HCT116 (cell line): ENCODE measurements at regions of chr1 and their contacts with region 1.

Region 1: DNA sequence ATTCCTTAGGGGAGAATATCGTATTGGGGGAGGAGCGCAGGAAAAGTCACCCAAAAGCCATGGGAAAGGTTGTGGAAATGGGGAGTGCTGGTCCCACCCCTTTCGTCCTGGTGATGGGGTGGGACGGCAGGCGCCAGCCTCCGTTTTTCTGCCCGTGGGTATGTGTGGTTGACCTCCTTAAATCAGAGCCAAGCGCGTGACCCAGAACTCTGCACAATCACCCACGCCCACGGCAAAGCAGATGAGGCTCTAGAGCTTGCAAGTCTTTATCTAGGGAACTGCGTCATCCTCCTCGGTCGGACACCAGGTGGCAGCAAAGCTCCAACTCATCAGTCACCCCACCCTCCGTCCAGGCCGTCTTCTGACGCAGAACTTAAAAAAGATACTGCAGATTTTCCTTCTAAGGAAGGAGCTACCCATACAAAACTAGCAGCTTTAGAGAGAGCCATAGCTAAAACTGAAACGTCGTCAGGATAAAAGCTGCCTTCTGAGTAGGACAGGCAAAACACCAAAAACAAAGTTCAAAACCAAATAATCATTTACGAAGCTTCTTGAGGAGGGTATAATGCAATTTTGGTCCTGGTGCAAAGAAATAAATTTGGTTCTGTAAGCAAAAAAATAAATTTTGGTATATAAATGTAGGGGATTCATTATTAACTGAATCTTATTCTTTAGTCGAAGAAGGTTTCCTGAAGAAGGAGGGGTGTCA is 62.0 kb downstream of the TBX19 start:
- DNase-seq: peak; percentile 82
- ATAC-seq: peak; percentile 96
- H3K4me3 ChIP-seq: peak overlapping the region in 1 of 2 experiments; percentile 31; a peak in 2 of 4 replicates
- H3K27ac ChIP-seq: peak overlapping the region; percentile 38; the same call in 1 of the 2 replicates
- H3K4me1 ChIP-seq: peaks cover 11 to 21% of the 10 kb centered on the region in 2 experiments; a peak in 3 of 4 replicates
- H3K27me3 ChIP-seq: no peaks in the 10 kb centered on the region
- CTCF ChIP-seq: peak; percentile 58 to 87 (median 65)
- POLR2A ChIP-seq: no peak
- RAD21 ChIP-seq: peak; percentile 98

Region 2: GRCh38 chr1:168321945-168322344 is 20.8 kb before region 1 on chr1:
- CTCF ChIA-PET with region 1: interaction called, 12 read pairs
- POLR2A ChIA-PET with region 1: no interaction called
- RAD21 ChIA-PET with region 1: no interaction called
- intact Hi-C with region 1: no loop called
- DNase-seq: peak; percentile 27
- ATAC-seq: peak; percentile 75
- H3K4me3 ChIP-seq: no peak overlapping the region
- H3K27ac ChIP-seq: no peak overlapping the region
- H3K4me1 ChIP-seq: peaks cover 13 to 28% of the 10 kb centered on the region in 2 experiments
- H3K27me3 ChIP-seq: no peaks in the 10 kb centered on the region
- CTCF ChIP-seq: peak; percentile 40 to 65 (median 58); a peak in 5 of 6 replicates
- POLR2A ChIP-seq: no peak
- RAD21 ChIP-seq: peak; percentile 73

Region 3: GRCh38 chr1:168407832-168408535 is 65.3 kb after region 1 on chr1:
- CTCF ChIA-PET with region 1: interaction called, 11 read pairs
- POLR2A ChIA-PET with region 1: interaction called, 5 read pairs
- RAD21 ChIA-PET with region 1: interaction called in 1 of 2 experiments, 3 read pairs
- intact Hi-C with region 1: no loop called
- DNase-seq: no peak
- ATAC-seq: peak; percentile 14
- H3K4me3 ChIP-seq: peak overlapping the region; percentile 10 to 30; a peak in 3 of 4 replicates
- H3K27ac ChIP-seq: peak overlapping the region; percentile 95
- H3K4me1 ChIP-seq: peaks cover 54 to 74% of the 10 kb centered on the region in 2 experiments
- H3K27me3 ChIP-seq: no peaks in the 10 kb centered on the region
- CTCF ChIP-seq: no peak
- POLR2A ChIP-seq: no peak
- RAD21 ChIP-seq: no peak

Region 4: DNA sequence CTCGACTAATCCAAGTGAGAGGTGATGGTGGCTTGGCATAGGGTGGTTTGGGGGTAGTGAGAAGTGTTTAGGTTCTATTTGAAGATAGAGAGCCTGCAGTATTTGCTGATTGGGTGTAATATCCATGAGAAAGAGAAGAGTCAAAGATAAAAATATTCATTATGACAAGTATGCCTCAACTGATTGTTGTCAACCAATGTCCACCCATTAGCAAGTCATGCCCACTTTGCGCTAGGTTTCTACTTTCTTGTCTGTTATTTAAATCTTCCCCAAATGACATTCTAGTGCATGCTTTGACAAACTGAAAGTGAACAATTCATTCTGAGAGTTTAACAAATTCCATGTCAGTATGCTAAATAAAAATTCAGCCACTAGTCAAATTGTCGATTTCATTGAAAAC is 229.9 kb after region 1 on chr1:
- CTCF ChIA-PET with region 1: interaction called, 6 read pairs
- POLR2A ChIA-PET with region 1: no interaction called
- RAD21 ChIA-PET with region 1: no interaction called
- intact Hi-C with region 1: loop called (anchors 2 kb)
- DNase-seq: no peak
- ATAC-seq: no peak
- H3K4me3 ChIP-seq: no peak overlapping the region
- H3K27ac ChIP-seq: no peak overlapping the region
- H3K4me1 ChIP-seq: no peaks in the 10 kb centered on the region
- H3K27me3 ChIP-seq: no peaks in the 10 kb centered on the region
- CTCF ChIP-seq: no peak
- POLR2A ChIP-seq: no peak
- RAD21 ChIP-seq: no peak

Region 5: DNA sequence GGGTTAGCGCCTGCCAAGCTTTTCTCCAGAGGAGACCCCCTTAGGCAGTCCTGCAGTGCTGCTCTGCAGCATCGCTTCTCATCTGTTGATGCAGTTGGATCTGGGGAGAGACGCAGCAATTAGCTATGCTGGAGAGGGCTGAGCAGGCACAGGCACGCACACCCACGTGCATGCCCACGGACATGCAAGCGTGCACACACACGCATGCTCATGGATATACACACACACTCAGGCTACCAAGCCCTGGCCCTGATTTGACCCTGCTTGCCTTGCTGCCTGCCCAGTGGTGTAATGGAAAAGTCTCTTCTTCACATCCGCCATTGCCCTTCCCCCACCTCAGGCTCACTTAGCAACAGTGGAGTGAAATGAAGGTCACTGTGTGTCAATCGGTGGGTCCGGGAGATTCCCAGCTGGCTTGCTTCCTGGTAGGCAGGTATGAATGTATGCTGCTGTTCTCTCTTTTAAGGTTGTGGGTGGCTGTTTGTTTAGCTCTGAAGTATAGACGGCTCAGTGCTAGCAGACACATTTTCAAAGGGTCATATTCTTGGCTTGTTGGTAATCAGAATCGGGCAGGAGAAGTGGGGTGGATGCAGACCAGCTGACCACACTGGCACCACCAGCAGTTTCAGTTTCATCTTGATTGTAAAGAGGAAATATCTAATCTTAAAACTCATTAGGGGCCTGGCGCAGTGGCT is 773.3 kb after region 1 on chr1:
- CTCF ChIA-PET with region 1: interaction called, 3 read pairs
- POLR2A ChIA-PET with region 1: no interaction called
- RAD21 ChIA-PET with region 1: no interaction called
- intact Hi-C with region 1: loop called (anchors 10 kb)
- DNase-seq: no peak
- ATAC-seq: no peak
- H3K4me3 ChIP-seq: no peak overlapping the region
- H3K27ac ChIP-seq: no peak overlapping the region
- H3K4me1 ChIP-seq: peaks cover 54 to 91% of the 10 kb centered on the region in 2 experiments
- H3K27me3 ChIP-seq: no peaks in the 10 kb centered on the region
- CTCF ChIP-seq: no peak
- POLR2A ChIP-seq: no peak
- RAD21 ChIP-seq: no peak